ENCODE measurements at regions of chr3 and their contacts with region 1.

Region 1: GRCh38 chr3:194671900-194672808 is at the start of gene LSG1:
- DNase-seq: peak; percentile 92 to 93
- H3K4me3 ChIP-seq: peak within 1 kb of the TSS; percentile 67
- H3K4me1 ChIP-seq: peaks cover 20% of the 10 kb centered on the region
- H3K27me3 ChIP-seq: peaks cover 6% of the 10 kb centered on the region; the same call in 1 of the 2 replicates

Region 2: DNA sequence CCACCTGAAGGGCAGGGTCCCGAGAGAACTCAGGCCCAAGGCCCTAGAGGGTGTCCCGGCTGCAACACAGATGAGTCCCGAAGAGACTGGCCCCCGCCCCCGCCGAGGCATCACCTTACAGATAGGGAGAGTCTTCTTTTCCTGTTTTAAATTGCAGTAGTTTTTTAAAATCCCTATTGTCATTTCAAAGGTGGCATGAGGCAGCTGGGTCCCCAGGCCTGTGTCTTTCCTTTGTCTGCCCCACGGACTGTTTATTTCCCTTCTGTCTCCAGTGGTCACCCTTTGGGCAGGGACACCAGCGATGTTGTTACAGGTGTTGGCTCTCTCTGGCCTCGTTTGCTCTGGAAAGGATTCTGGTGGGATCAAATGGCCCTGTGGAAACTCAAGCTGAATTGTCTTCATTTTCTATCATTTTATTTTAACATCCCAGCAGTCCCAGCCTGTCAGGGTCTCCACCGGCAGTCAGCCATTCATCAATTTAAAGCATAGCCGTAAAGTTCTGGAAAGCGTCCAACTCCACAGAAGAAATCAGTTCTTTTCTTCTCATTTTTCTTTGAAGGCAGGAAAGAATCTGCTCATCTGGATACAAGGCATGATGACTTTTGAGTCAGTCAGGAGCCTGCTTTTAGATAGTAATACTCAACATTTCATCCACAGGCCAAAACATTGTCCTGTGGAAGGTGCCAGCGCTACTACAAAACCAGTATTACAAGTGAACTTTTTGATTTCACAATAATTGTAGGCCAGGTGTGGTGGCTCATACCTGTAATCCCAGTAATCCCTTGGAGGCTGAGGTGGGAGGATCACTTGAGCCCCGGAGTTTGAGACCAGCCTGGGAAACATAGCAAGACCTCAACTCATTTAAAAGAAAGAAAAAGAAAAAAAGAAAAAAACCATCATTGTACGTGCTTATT is 440.0 kb before region 1 on chr3:
- in situ Hi-C with region 1: no loop called
- DNase-seq: no peak
- H3K4me3 ChIP-seq: no peak overlapping the region
- H3K4me1 ChIP-seq: no peaks in the 10 kb centered on the region
- H3K27me3 ChIP-seq: no peaks in the 10 kb centered on the region

Region 3: DNA sequence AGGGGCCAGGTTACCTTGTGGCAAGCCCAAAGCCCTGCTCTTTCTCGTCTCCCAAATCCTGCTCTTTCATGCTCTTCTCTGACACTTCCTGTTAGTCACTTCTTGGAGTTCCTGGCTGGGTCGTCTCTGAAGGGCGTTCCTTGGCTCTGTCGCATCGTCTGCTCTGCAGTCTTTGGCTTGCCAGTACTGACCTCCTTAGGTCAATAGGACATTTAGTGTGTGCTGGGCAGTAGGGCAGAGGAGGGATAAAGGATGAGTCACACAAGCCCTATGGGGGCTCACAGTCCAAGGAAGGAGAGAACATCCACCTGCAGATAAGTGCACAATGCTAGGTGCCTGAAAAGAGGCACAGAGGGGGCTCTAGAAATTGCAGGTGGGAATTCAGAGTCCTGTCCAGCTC is 101.1 kb after region 1 on chr3:
- in situ Hi-C with region 1: no loop called
- DNase-seq: no peak
- H3K4me3 ChIP-seq: no peak overlapping the region
- H3K4me1 ChIP-seq: peaks cover 5% of the 10 kb centered on the region; the same call in 1 of the 2 replicates
- H3K27me3 ChIP-seq: no peaks in the 10 kb centered on the region; the same call in 1 of the 2 replicates

Region 4: DNA sequence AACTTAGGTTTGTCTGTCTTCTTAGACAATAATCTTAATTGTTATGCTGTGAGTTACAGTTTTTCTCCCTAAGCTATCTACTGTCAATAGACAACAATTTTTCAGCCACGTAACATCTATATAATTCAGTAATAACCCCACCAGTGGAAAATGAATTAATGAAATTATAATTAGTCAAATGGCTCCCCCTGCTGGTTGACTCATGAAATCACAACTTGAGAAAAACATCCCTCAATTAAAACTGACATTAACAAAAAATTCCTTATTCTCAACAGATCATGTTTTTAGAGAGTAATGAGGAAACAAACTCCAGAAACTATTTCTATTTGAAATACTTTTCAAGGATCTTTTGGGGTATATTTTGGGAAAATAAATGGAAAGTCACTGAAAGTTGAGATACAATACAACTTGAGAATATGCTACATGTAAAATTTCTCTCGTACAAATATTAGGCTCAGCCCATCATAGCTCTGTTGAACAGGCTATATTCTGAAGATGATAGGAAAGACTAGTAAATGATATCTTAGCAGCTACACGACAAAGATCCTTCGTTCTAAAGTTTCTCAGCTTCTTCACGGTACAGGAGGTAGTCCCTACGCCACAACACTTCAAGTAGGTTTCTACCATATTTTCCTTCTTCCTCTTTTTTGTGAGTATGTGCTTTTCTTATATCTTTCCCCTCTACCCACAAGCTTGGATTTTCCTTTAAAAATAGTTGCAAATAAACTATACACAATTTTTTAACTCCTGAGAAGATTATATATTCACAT is 850.3 kb after region 1 on chr3:
- in situ Hi-C with region 1: loop called (anchors 10 kb)
- DNase-seq: peak; percentile 30 to 36
- H3K4me3 ChIP-seq: no peak overlapping the region
- H3K4me1 ChIP-seq: no peaks in the 10 kb centered on the region
- H3K27me3 ChIP-seq: no peaks in the 10 kb centered on the region

Measured in HAP-1 (cell line).